Activated CD8-positive, alpha-beta T cell treated with anti-CD3 and anti-CD28 coated beads for 36 hours (primary cell): ENCODE measurements at regions of chrX and their contacts with region 1.

Region 1: DNA sequence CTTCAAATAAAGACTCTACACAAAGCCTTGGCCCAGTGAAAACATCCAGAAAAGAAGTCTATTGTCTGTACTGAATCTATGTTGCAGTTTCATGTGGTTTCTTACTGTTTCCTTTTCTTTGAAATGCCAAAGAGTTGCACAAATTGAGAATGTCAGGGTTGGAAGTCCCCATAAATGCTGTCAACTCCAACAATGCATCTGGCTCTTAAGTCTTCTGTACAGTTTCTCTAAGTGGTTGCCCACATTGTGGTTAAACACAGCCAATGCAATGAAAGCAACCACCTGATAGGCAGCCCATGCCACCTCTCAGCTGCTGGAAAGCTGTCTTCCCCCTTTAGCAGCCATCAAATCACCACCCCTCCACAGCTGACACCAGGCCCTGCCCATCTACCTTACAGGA is 67.2 kb upstream of the C1GALT1C1 start:
- DNase-seq: peak; percentile 72
- ATAC-seq: peak; percentile 92
- H3K4me3 Mint-ChIP-seq: peak overlapping the region; percentile 8
- H3K27ac Mint-ChIP-seq: peak overlapping the region; percentile 96
- H3K4me1 Mint-ChIP-seq: peaks cover 20% of the 10 kb centered on the region
- H3K27me3 Mint-ChIP-seq: no peaks in the 10 kb centered on the region
- CTCF ChIP-seq: no peak

Region 2: DNA sequence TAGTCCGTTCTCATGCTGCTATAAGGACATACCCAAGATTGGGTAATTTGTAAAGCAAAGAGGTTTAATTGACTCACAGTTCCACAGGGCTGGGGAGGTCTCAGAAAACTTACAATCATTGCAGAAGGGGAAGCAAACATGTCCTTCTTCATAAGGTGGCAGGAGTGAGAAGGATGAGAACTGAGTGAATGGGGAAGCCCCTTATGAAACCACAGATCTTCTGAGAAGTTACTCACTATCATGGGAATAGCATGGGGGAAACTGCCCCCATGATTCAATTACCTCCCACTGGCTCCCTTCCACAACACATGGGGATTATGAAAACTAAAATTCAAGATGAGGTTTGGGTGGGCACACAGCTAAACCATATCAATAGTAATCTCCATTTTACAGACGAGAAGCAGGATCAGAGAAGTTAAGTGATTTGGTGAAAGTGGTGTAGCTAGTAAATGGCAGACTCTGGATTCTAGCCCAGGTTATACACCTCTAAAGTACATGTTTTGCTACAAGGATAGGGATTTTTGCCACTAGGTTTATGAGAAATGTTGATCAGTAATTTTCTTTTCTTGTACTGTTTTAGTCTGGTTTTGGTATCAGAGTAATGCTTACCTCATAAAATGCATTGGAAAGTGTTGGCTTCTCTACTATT is 19.9 kb before region 1 on chrX:
- CTCF ChIA-PET with region 1: no interaction called
- POLR2A ChIA-PET with region 1: interaction called, 3 read pairs
- intact Hi-C with region 1: loop called (anchors 1 kb)
- DNase-seq: peak; percentile 49
- ATAC-seq: peak; percentile 94
- H3K4me3 Mint-ChIP-seq: no peak overlapping the region
- H3K27ac Mint-ChIP-seq: peak overlapping the region; percentile 80
- H3K4me1 Mint-ChIP-seq: peaks cover 24% of the 10 kb centered on the region
- H3K27me3 Mint-ChIP-seq: no peaks in the 10 kb centered on the region
- CTCF ChIP-seq: no peak